Naive thymus-derived CD4-positive, alpha-beta T cell (primary cell): ENCODE measurements at regions of chr6 and their contacts with region 1.

Region 1: DNA sequence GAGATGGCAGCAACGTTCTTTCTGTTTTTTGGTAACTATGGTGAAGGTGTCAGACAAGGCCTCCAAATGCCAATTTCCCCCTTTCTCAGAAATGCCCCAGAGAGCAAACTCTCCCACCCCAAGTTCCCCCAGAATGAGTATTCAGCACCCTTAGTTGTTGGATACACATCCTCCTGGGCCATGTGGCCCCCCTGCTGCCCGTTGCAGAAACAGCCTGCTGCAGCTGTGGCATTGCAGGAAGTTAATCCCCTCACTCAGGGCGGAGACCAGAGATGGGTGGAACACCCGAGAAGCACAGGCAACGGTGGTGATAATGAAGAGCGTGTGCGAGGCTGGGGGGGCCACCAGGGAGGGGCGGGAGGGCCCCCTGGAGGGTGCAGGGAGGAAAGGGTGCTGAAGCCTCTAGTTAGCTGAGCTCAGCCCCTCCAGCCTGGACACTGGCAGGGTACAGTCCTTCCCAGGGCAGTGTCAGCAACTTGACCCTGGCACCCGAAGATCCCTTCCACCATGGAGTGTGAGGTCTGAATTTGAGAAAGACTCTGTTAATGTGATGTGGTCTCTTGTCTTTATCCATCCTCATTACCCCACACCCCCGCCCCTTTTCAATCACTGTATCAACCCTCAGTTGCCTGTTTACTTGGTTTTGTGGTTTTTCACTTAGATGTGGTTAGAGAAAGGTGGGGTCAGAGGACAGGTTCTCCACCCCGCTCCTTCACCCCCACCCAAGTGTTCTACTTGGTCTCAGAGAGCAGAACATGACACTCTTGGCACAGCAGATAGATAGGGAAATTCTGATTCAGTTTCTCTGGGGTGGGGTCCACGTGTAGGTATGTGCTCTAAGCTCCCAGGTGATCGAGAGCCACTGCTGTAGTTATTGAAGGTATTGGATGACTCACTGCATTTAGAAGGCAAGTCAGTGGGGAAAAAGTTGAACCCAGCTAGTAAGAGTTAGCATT is 208.8 kb upstream of the SUPT3H start:
- DNase-seq: peak; percentile 11 to 93 (median 86)
- ATAC-seq: peak; percentile 93
- H3K4me3 ChIP-seq: peak overlapping the region; percentile 4
- H3K4me3 Mint-ChIP-seq: peak overlapping the region; percentile 76 to 89 (median 81)
- H3K27ac ChIP-seq: peak overlapping the region; percentile 9
- H3K27ac Mint-ChIP-seq: peak overlapping the region; percentile 59 to 97 (median 89)
- H3K4me1 ChIP-seq: peaks cover 48 to 67% of the 10 kb centered on the region in 2 donors
- H3K4me1 Mint-ChIP-seq: peaks cover 40 to 70% (median 69%) of the 10 kb centered on the region in 7 donors
- H3K27me3 ChIP-seq: no peaks in the 10 kb centered on the region
- H3K27me3 Mint-ChIP-seq: no peaks in the 10 kb centered on the region

Region 2: DNA sequence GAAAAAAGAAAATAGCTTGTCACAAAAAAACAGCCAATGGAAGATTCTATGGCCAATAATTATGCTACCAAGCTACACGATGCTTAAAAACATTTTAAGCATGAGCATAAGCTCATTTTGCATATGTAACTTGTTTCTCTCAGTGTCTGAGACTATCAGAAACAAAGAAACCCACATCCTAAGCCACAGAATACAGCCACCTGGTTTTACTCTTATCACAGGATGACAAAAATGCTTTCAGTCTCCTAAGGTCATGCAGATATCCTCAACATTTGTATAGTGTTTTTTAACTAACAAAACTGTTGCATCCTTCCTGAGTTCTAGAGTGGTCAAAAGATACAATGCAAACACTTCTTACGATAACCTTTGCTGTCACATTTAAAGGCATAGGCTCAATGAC is 430.4 kb before region 1 on chr6:
- CTCF ChIA-PET with region 1: no interaction called
- POLR2A ChIA-PET with region 1: no interaction called
- intact Hi-C with region 1: loop called in 1 of 2 experiments (anchors 10 kb)
- DNase-seq: peak in 7 of 9 donors; percentile 46 to 81 (median 76)
- ATAC-seq: peak; percentile 96
- H3K4me3 ChIP-seq: no peak overlapping the region
- H3K4me3 Mint-ChIP-seq: peak overlapping the region in 9 of 10 donors; percentile 0 to 63 (median 39)
- H3K27ac ChIP-seq: no peak overlapping the region
- H3K27ac Mint-ChIP-seq: peak overlapping the region in 8 of 9 donors; percentile 27 to 89 (median 60)
- H3K4me1 ChIP-seq: peaks cover 7 to 12% of the 10 kb centered on the region in 2 donors
- H3K4me1 Mint-ChIP-seq: peaks cover 2 to 43% (median 29%) of the 10 kb centered on the region in 7 donors
- H3K27me3 ChIP-seq: no peaks in the 10 kb centered on the region
- H3K27me3 Mint-ChIP-seq: no peaks in the 10 kb centered on the region

Region 3: DNA sequence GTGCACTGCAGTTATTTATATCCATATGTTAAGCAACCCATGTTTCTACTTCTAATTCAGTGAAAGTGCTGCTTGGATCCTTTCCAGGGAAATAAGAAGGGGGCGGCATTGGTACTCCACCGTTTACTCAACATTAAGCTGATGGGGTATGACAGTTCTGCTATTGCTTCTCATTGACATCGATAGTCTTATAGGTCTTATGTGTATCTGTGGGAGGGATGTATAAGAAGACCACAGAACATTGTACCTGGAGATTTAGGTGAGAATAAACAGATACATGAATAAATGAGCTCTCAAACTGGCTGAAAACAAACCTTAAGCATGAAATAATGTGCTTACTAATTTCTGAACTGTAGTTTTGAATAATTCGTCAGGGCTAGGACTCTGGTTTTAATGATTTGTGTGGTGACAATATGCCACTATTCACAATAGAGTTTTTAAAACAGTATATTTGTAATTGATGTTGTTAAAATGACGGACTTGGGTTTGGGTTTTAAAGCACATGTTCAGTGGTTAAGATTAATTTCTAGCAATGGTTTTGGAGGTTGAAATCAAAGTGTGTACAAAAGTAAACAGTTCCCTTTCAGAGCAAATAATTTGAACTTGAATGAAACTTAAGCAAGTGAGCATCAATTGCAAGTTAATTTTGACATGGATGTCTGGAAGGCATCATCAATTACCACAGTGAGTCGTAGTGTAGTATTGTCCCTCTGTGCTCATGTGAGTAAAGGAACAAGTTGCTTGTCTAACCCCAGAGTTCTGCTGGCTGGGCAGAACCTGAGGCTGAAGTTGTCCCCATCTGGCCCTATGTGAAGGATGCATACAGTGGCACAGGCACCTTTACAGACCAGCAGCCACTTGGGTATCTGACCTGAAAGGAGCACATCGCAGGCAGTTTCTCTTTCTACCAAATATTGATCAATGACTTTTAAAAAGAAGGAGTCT is 124.0 kb before region 1 on chr6:
- CTCF ChIA-PET with region 1: no interaction called
- POLR2A ChIA-PET with region 1: no interaction called
- intact Hi-C with region 1: no loop called
- DNase-seq: no peak
- ATAC-seq: no peak
- H3K4me3 ChIP-seq: no peak overlapping the region
- H3K4me3 Mint-ChIP-seq: no peak overlapping the region
- H3K27ac ChIP-seq: no peak overlapping the region
- H3K27ac Mint-ChIP-seq: no peak overlapping the region
- H3K4me1 ChIP-seq: peaks cover 6 to 9% of the 10 kb centered on the region in 2 donors
- H3K4me1 Mint-ChIP-seq: peaks cover 0 to 20% (median 7%) of the 10 kb centered on the region in 7 donors
- H3K27me3 ChIP-seq: no peaks in the 10 kb centered on the region
- H3K27me3 Mint-ChIP-seq: no peaks in the 10 kb centered on the region

Region 4: DNA sequence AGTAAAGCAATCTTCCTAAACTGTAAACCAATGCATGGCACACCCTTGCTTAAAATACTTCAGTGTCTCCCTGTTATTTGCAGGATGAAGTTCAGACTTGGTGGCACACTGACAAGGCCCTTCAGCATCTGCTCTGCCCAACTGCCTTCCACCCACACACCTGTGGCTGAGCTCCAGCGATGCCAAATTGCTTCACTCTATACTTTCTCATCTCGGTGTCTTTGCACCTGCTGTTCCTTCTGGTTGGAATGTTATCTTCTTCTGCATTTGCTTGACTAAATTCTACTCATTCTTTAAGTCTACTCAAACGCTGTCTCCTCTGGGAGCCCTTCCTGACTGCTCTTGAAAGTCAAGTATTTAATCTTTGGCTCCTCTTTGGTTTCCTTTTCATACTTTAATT is 108.7 kb before region 1 on chr6:
- CTCF ChIA-PET with region 1: no interaction called
- POLR2A ChIA-PET with region 1: no interaction called
- intact Hi-C with region 1: loop called in 1 of 2 experiments (anchors 2 kb)
- DNase-seq: no peak
- ATAC-seq: no peak
- H3K4me3 ChIP-seq: no peak overlapping the region
- H3K4me3 Mint-ChIP-seq: no peak overlapping the region
- H3K27ac ChIP-seq: no peak overlapping the region
- H3K27ac Mint-ChIP-seq: no peak overlapping the region
- H3K4me1 ChIP-seq: no peaks in the 10 kb centered on the region
- H3K4me1 Mint-ChIP-seq: peaks cover 5 to 11% (median 7%) of the 10 kb centered on the region in 7 donors
- H3K27me3 ChIP-seq: no peaks in the 10 kb centered on the region
- H3K27me3 Mint-ChIP-seq: no peaks in the 10 kb centered on the region

Region 5: DNA sequence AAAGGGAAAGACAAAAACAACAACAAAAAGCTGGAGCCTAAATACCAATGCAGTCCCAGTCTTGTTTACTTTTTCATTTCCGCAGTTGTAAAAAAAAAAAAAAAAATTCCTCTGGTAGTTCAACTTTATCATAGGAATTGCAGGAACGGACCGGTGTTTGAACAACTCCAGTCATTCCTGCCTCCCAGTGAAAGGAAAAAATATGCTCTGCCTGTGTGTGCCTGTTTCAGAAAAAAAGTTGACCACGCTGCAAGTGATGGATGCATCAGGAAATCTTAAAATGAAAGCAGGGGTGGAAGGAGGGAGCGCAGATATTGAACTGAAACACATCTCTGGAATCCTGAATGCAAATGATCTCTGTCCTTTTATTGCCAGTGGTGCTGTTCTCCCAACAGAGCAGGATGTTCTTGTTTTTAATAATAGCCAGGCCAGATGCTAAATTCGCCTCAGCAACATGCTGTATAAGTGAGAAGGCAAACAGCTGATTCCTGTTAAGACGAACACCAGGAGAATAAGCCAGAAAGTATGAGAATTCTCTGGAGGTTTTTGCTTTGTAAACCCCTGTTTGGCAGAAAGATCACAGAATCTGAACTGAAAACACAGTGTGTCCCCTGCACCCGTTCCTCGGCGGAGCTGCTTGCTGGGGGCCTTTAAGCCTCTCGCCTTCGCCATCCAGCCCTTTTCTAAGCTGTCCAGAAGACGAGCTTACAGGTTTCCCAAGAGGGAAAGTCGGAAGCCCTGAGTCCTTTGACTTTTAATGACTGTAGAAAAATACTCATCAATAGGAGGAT is 30.3 kb before region 1 on chr6:
- CTCF ChIA-PET with region 1: no interaction called
- POLR2A ChIA-PET with region 1: no interaction called
- intact Hi-C with region 1: loop called in 1 of 2 experiments (anchors 2 kb)
- DNase-seq: no peak
- ATAC-seq: no peak
- H3K4me3 ChIP-seq: no peak overlapping the region
- H3K4me3 Mint-ChIP-seq: no peak overlapping the region
- H3K27ac ChIP-seq: no peak overlapping the region
- H3K27ac Mint-ChIP-seq: no peak overlapping the region
- H3K4me1 ChIP-seq: no peaks in the 10 kb centered on the region
- H3K4me1 Mint-ChIP-seq: peaks cover 6 to 34% (median 7%) of the 10 kb centered on the region in 7 donors
- H3K27me3 ChIP-seq: no peaks in the 10 kb centered on the region
- H3K27me3 Mint-ChIP-seq: no peaks in the 10 kb centered on the region

Region 6: GRCh38 chr6:45619994-45620471 is 33.5 kb after region 1 on chr6:
- CTCF ChIA-PET with region 1: no interaction called
- POLR2A ChIA-PET with region 1: interaction called, 4 read pairs
- intact Hi-C with region 1: loop called in 1 of 2 experiments (anchors 2 kb)
- DNase-seq: peak in 6 of 9 donors; percentile 4 to 37 (median 25)
- ATAC-seq: peak; percentile 40
- H3K4me3 ChIP-seq: peak overlapping the region; percentile 21
- H3K4me3 Mint-ChIP-seq: peak overlapping the region in 9 of 10 donors; percentile 29 to 62 (median 47)
- H3K27ac ChIP-seq: peak overlapping the region; percentile 18
- H3K27ac Mint-ChIP-seq: peak overlapping the region; percentile 32 to 97 (median 73)
- H3K4me1 ChIP-seq: peaks cover 6 to 12% of the 10 kb centered on the region in 2 donors
- H3K4me1 Mint-ChIP-seq: peaks cover 12 to 35% (median 17%) of the 10 kb centered on the region in 7 donors
- H3K27me3 ChIP-seq: no peaks in the 10 kb centered on the region
- H3K27me3 Mint-ChIP-seq: no peaks in the 10 kb centered on the region

Region 7: GRCh38 chr6:45677381-45678284 is 91.1 kb after region 1 on chr6:
- CTCF ChIA-PET with region 1: no interaction called
- POLR2A ChIA-PET with region 1: no interaction called
- intact Hi-C with region 1: loop called in 1 of 2 experiments (anchors 1 kb)
- DNase-seq: peak in 8 of 9 donors; percentile 32 to 68 (median 53)
- ATAC-seq: peak; percentile 83
- H3K4me3 ChIP-seq: peak overlapping the region; percentile 3
- H3K4me3 Mint-ChIP-seq: peak overlapping the region; percentile 71 to 84 (median 77)
- H3K27ac ChIP-seq: peak overlapping the region; percentile 12
- H3K27ac Mint-ChIP-seq: peak overlapping the region; percentile 65 to 92 (median 83)
- H3K4me1 ChIP-seq: peaks cover 12 to 27% of the 10 kb centered on the region in 2 donors
- H3K4me1 Mint-ChIP-seq: peaks cover 17 to 54% (median 43%) of the 10 kb centered on the region in 7 donors
- H3K27me3 ChIP-seq: no peaks in the 10 kb centered on the region
- H3K27me3 Mint-ChIP-seq: no peaks in the 10 kb centered on the region